ENCODE measurements at regions of chr3 and their contacts with region 1.

Region 1: DNA sequence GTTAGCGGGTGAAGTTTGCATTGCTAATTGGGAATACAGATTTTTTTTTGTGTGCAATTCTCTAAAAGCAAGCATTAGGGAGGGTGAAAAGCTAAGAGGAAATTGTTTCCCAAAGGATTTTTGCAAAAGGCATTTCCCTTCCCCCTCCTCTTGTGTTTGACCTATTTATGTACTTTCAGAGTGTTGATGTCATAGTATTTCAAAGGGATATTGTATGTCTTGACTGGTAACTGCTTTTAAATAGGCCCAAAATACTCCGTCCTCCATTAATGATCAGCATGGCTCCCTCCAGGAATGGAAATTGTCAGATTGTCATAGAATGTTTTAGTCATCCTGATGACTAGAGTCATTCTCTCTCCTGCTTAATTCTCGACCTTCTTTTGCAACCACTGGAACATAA is 32.4 kb downstream of the TRIM71 start:
- DNase-seq: no peak
- H3K4me3 ChIP-seq: no peak overlapping the region
- H3K27me3 ChIP-seq: peaks cover under 1% of the 10 kb centered on the region; the same call in 1 of the 2 replicates
- CTCF ChIP-seq: no peak

Region 2: GRCh38 chr3:32691847-32692246 is 158.4 kb before region 1 on chr3:
- CTCF ChIA-PET with region 1: no interaction called
- POLR2A ChIA-PET with region 1: interaction called, 14 read pairs
- DNase-seq: no peak
- H3K4me3 ChIP-seq: no peak overlapping the region
- H3K27me3 ChIP-seq: no peaks in the 10 kb centered on the region
- CTCF ChIP-seq: no peak

Region 3: GRCh38 chr3:33063651-33064051 is 213.4 kb after region 1 on chr3:
- CTCF ChIA-PET with region 1: no interaction called
- POLR2A ChIA-PET with region 1: no interaction called
- DNase-seq: peak; percentile 53
- H3K4me3 ChIP-seq: no peak overlapping the region
- H3K27me3 ChIP-seq: no peaks in the 10 kb centered on the region
- CTCF ChIP-seq: no peak

Measured in BJ (cell line).